Sciatic nerve (tissue), 2 donors: ENCODE measurements at regions of chr19 and their contacts with region 1.

Region 1: DNA sequence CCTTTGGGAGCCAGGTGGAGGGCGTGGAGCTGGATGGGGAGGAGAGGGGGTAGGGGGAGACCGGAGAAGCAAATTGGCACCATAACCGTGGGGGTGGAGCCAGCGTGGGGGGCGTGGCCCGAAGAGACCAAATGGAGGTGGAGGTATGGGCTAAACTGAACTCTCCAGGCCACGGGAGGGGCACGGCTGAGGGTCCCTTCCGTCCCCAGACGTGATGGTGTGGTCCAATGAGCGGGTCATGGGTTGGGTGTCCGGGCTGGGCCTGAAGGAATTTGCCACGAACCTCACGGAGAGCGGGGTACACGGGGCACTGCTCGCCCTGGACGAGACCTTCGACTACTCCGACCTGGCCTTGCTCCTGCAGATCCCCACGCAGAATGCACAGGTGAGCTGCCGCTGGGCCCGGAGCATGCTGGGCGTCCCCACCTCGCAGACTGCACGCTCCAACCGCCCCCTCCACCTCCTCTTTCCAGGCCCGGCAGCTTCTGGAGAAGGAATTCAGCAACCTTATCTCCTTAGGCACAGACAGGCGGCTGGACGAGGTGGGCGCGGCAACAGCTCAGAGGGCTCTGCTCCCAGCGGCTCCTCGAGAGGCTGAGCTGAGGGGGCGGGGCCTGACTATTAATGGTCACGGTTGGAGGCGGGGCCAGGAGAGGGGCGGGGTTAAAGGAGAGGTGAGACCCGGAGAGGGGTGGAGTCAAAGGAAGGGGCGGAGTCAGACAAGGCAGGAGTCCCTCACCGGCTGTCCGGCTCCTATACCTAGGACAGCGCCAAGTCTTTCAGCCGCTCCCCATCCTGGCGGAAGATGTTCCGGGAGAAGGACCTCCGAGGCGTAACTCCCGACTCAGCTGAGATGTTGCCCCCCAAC is 6.2 kb downstream of the HRC start:
- DNase-seq: peak; percentile 98
- ATAC-seq: peak; percentile 89

Region 2: GRCh38 chr19:49085020-49085867 is 63.8 kb before region 1 on chr19 and contains the start of gene SNRNP70:
- intact Hi-C with region 1: loop called (anchors 10 kb)
- DNase-seq: peak; percentile 99
- ATAC-seq: peak; percentile 100
- total RNA-seq, gene SNRNP70: 299 TPM